OCI-LY7 (cell line): ENCODE measurements at regions of chr10 and their contacts with region 1.

Region 1: GRCh38 chr10:43255634-43256431 is 11.0 kb downstream of the RASGEF1A start:
- DNase-seq: peak; percentile 68
- H3K4me3 ChIP-seq: no peak overlapping the region
- H3K27ac ChIP-seq: no peak overlapping the region
- H3K4me1 ChIP-seq: no peaks in the 10 kb centered on the region
- CTCF ChIP-seq: peak; percentile 83

Region 2: GRCh38 chr10:43221419-43222209 is 34.2 kb before region 1 on chr10:
- CTCF ChIA-PET with region 1: interaction called, 3 read pairs
- POLR2A ChIA-PET with region 1: no interaction called
- intact Hi-C with region 1: loop called (anchors 5 kb)
- DNase-seq: no peak
- H3K4me3 ChIP-seq: no peak overlapping the region
- H3K27ac ChIP-seq: no peak overlapping the region
- H3K4me1 ChIP-seq: peaks cover 8% of the 10 kb centered on the region
- CTCF ChIP-seq: peak; percentile 36; the same call in 1 of the 2 replicates

Region 3: GRCh38 chr10:43304687-43305340 is 49.0 kb after region 1 on chr10:
- CTCF ChIA-PET with region 1: no interaction called
- POLR2A ChIA-PET with region 1: no interaction called
- intact Hi-C with region 1: no loop called
- DNase-seq: no peak
- H3K4me3 ChIP-seq: no peak overlapping the region
- H3K27ac ChIP-seq: no peak overlapping the region
- H3K4me1 ChIP-seq: no peaks in the 10 kb centered on the region
- CTCF ChIP-seq: no peak

Region 4: GRCh38 chr10:43336641-43337318 is 80.9 kb after region 1 on chr10:
- CTCF ChIA-PET with region 1: interaction called, 12 read pairs
- POLR2A ChIA-PET with region 1: no interaction called
- intact Hi-C with region 1: no loop called
- DNase-seq: no peak
- H3K4me3 ChIP-seq: no peak overlapping the region
- H3K27ac ChIP-seq: no peak overlapping the region
- H3K4me1 ChIP-seq: no peaks in the 10 kb centered on the region
- CTCF ChIP-seq: no peak

Region 5: DNA sequence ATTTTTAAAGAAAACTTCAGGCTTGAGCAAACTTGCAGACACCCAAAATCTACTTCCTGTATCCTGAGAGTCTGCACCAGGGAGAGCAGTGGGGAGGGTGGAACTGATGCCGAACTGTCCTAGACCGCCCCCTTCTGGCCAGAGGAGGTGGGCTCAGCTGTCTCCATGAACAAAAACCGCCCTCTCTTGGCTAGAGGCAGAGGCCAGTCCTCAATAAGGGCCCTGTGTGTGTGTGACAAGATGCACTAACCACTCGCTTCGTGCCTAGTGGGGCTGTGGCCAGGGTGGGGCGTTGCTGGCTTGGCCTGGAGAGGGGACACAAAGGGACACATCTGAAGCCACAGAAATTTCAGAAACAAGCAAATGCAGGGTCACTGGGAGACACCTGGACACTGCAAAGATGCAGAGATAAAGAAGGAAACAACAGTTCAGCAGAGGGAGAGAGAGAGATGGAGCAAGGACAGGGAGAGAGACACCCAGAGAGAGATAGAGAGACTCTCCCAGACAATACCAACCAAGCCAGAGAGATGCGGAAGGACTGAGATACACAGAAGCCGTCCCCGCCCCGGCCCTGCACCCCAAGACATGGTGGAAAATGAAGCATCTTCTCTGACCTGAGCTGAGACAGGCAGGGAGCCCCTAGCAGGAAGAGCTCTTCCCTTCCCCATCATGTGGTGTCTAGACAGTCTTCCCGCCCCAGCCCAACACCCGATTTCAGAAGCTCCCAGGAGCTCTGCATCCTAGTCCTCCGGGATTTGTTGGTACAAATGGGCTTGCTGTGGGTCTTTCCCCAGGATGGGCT is 92.9 kb after region 1 on chr10:
- CTCF ChIA-PET with region 1: no interaction called
- POLR2A ChIA-PET with region 1: no interaction called
- intact Hi-C with region 1: no loop called
- DNase-seq: peak; percentile 88
- H3K4me3 ChIP-seq: no peak overlapping the region
- H3K27ac ChIP-seq: no peak overlapping the region
- H3K4me1 ChIP-seq: peaks cover 8% of the 10 kb centered on the region
- CTCF ChIP-seq: peak; percentile 98